IMR-90 (cell line): ENCODE measurements at regions of chr15 and their contacts with region 1.

Region 1: DNA sequence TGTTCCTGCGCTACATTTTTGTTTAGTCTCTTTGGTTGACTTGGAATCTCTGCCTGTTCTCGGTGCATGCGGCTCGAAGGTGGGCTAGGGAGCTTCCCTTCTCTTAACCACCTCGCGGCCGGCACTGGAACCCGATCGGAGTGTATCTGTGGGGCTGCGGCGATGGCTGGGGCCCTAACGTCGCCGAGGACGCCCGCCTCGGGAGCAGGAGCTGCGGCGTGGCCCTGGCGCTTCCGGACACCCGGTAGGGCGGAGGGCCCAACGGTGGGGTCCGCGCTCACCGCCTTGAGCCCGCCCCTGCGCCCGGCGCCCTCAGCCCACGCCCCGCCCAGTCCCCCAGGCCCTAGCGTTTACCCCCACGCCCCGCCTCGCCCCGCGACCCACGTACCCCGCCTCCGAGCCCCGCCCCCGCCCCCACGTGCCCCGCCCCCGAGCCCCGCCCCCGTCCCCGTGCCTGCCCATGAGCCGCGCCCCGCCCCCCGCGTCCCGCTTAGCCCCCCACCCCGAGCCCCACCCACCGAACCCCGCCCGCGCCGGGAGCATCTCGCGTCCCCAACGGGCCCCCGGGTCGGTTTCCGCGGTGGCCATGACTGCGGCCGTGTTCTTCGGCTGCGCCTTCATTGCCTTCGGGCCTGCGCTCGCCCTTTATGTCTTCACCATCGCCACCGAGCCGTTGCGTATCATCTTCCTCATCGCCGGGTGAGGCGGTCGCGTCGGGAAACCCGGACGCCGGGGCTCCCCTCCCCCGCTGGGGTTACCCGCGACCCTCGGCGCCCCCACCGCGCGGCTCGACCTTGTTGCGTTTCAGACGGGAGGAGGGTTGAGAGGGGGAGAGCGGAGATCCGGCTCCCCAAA is at the start of gene APH1B:
- DNase-seq: peak; percentile 48
- ATAC-seq: peak; percentile 92
- H3K4me3 ChIP-seq: peak within 1 kb of the TSS; percentile 92
- H3K27ac ChIP-seq: peak within 1 kb of the TSS; percentile 86
- H3K4me1 ChIP-seq: peaks cover 3% of the 10 kb centered on the region; the same call in 1 of the 2 replicates
- H3K27me3 ChIP-seq: no peaks in the 10 kb centered on the region
- CTCF ChIP-seq: no peak
- POLR2A ChIP-seq: no peak
- RAD21 ChIP-seq: no peak
- total RNA-seq, gene APH1B: 7.7 and 10.6 TPM in 2 replicates

Region 2: DNA sequence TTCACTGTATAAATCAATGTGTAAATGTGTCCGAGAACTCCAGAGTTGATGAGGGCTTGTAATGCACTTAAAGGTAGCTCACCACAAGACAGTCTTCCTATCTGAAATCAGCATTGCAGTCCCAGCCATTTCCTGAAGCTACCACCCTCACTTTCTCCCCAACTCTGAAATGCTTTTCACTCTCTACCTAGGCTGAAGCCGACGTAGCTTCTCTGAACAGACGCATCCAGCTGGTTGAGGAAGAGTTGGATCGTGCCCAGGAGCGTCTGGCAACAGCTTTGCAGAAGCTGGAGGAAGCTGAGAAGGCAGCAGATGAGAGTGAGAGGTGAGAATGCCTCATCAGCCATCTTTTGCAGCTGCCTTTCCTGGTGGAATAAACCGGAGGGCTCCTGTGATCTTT is 220.5 kb before region 1 on chr15:
- CTCF ChIA-PET with region 1: no interaction called
- POLR2A ChIA-PET with region 1: no interaction called
- dilution Hi-C with region 1: no loop called
- in situ Hi-C with region 1: no loop called
- intact Hi-C with region 1: loop called (anchors 2 kb)
- DNase-seq: peak; percentile 85
- ATAC-seq: no peak; the same call in 1 of the 2 replicates
- H3K4me3 ChIP-seq: no peak overlapping the region
- H3K27ac ChIP-seq: peak overlapping the region; percentile 4; the same call in 1 of the 2 replicates
- H3K4me1 ChIP-seq: peaks cover 36% of the 10 kb centered on the region
- H3K27me3 ChIP-seq: no peaks in the 10 kb centered on the region
- CTCF ChIP-seq: no peak
- POLR2A ChIP-seq: no peak
- RAD21 ChIP-seq: no peak

Region 3: DNA sequence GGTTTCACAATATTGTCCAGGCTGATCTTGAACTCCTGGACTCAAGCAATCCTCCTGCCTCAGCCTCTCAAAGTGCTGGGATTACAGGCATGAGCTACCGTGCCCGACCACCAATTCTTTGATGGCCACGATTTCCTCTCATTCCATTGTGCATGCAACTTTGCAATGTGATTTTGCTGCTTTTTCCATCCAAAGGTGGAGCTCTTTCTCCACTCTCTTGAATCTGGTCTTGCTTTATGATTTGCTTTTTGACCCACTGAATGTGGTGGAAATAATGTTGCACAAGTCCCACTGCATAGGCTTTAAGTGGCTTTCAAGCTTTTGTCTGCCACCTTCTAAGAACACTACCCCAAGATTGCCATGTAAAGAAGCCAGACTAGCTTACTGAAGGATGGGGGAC is 130.6 kb before region 1 on chr15:
- CTCF ChIA-PET with region 1: no interaction called
- POLR2A ChIA-PET with region 1: no interaction called
- dilution Hi-C with region 1: no loop called
- in situ Hi-C with region 1: no loop called
- intact Hi-C with region 1: no loop called
- DNase-seq: peak; percentile 27
- ATAC-seq: peak; percentile 6; the same call in 1 of the 2 replicates
- H3K4me3 ChIP-seq: no peak overlapping the region
- H3K27ac ChIP-seq: no peak overlapping the region
- H3K4me1 ChIP-seq: no peaks in the 10 kb centered on the region; the same call in 1 of the 2 replicates
- H3K27me3 ChIP-seq: no peaks in the 10 kb centered on the region
- CTCF ChIP-seq: peak; percentile 27; the same call in 1 of the 2 replicates
- POLR2A ChIP-seq: no peak
- RAD21 ChIP-seq: peak; percentile 23

Region 4: DNA sequence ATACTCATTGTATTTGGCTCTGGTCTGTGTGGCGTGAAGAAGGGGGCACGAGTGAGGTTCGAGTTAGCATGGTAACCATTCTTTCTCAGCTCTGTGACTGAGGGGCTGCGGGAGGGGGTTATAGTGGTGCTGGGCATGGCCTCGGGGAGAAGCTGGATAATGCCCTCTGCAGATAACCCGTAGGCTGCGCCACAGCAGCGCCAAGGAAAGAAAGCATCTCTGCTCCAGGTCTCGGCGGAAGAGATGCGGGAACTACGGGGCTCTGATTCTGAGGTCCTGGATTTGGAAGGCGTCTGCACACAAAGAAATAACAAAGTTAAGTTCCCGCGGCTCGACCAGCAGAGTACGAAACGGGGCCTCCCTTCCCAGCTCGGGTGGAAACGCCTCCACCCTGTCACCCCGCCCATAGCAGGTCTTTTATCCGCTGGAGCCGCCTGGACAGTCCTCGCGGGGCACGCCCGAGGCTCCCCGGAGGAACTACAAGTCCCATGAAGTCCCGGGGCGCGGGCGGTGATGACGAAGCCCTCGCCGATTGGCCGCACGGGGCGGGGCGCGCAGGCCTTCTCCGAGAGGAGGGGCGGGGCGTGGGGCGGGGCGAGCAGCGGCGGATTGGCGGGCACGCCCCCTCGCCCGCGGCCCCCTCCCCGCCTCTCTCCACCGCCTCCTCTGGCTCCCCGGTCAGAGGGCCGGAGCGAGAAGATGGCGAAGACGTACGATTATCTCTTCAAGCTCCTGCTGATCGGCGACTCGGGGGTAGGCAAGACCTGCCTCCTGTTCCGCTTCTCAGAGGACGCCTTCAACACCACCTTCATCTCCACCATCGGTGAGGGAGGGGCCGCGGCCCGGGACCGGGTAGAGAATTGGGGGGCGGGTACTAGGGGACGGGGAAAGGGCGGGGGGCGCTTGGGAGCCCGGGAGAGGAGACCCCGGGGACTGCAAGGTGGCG is 88.1 kb before region 1 on chr15 and contains the start of gene RAB8B:
- CTCF ChIA-PET with region 1: no interaction called
- POLR2A ChIA-PET with region 1: no interaction called
- dilution Hi-C with region 1: no loop called
- in situ Hi-C with region 1: no loop called
- intact Hi-C with region 1: loop called (anchors 2 kb)
- DNase-seq: peak; percentile 94
- ATAC-seq: peak; percentile 98
- H3K4me3 ChIP-seq: peak within 1 kb of the TSS; percentile 95
- H3K27ac ChIP-seq: peak within 1 kb of the TSS; percentile 97
- H3K4me1 ChIP-seq: peaks cover 10% of the 10 kb centered on the region
- H3K27me3 ChIP-seq: no peaks in the 10 kb centered on the region
- CTCF ChIP-seq: no peak
- POLR2A ChIP-seq: peak; percentile 72
- RAD21 ChIP-seq: no peak; the same call in 1 of the 2 replicates
- total RNA-seq, gene RAB8B: 29.4 and 66.4 TPM in 2 replicates

Region 5: GRCh38 chr15:63231706-63232105 is 45.6 kb before region 1 on chr15:
- CTCF ChIA-PET with region 1: no interaction called
- POLR2A ChIA-PET with region 1: no interaction called
- dilution Hi-C with region 1: no loop called
- in situ Hi-C with region 1: no loop called
- intact Hi-C with region 1: no loop called
- DNase-seq: no peak
- ATAC-seq: no peak
- H3K4me3 ChIP-seq: no peak overlapping the region
- H3K27ac ChIP-seq: no peak overlapping the region
- H3K4me1 ChIP-seq: peaks cover 22% of the 10 kb centered on the region
- H3K27me3 ChIP-seq: no peaks in the 10 kb centered on the region
- CTCF ChIP-seq: no peak
- POLR2A ChIP-seq: no peak
- RAD21 ChIP-seq: no peak